GM10248 (cell line): ENCODE measurements at regions of chr16 and their contacts with region 1.

Region 1: DNA sequence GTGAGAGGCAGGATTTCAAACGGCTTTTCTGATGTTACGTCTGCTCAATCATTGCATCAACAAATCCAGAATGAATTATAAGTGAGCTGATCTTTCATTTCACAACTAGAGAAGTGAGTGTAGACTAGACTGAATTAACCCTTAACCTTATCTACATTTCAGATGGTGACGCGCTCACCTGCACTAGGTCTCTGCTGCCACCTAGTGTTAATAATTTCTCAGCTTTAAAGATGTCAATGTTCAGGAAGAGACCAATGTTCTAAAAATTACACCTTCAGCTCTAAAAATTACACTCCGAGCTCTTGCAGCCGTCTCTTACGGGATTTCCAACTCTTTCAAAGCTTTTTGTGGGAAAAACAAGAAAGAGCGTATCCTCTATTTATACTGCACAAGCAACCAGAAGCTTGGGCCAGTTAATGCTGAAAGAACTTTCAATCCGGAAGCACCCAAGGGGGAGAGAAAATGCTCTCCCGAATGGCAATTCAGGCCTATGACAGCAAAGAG is 88.2 kb upstream of the FA2H start:
- DNase-seq: peak; percentile 79
- CTCF ChIP-seq: peak; percentile 62

Region 2: DNA sequence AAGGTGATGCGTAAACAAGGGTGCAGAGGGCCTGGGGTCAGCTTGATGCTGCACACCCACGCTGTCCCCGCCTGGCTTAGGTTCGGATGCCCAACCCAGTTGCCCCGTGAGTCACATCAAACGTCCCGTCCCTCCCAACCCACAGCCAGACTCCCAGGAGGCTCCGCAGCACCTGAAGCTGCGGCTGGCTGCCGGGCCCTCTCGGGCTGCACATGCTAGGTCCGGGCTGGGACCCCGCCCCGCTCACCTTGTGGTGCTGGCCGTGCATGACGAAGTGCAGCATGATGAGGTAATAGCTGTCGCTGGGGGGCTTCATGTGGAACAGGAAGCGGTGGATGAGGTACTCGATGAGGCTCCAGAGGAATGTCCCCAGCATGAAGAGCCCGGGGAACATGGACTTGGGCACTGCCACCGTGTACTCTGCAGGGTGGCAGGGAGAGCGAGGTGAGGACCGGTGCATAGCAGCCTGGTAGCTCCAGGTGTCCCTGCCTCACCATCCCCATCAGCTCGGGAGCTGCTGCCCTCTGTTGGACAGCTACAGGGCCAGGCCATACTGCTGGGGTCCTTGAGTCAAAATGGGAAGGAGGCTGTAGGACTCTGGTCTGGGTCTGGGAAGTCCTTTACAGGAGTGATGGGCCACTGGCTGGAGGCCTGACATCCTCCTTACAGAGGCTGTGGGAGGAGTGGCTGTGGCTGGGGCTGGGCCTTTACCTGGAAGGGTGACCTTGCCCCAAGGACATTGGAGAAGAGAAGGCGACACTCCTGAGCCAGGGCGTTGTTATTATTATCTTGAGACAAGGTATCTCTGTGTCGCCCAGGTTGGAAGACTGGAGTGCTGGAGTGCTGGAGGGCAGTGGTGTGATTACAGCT is 143.8 kb before region 1 on chr16:
- CTCF ChIA-PET with region 1: interaction called, 121 read pairs
- POLR2A ChIA-PET with region 1: no interaction called
- DNase-seq: no peak
- CTCF ChIP-seq: no peak

Region 3: DNA sequence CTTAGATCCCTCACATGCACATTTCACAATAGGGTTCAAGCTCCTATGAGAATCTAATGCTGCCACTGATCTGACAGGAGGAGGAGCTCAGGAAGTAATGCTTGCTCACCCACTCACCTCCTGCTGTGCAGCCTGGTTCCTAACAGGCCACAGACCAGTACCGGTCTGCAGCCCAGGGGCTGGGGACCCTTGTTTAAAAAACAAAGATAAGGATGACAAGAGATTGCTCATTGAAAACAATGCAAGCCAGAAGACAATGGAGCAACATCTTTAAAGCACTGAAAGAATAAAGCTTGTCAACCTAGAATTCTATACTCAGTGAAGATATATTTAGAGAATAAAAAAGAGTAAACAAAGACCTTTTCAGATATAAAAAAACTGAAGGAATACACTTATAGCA is 65.4 kb before region 1 on chr16:
- CTCF ChIA-PET with region 1: interaction called, 11 read pairs
- POLR2A ChIA-PET with region 1: no interaction called
- DNase-seq: no peak
- CTCF ChIP-seq: no peak

Region 4: GRCh38 chr16:74837056-74837455 is 25.7 kb before region 1 on chr16:
- CTCF ChIA-PET with region 1: interaction called, 22 read pairs
- POLR2A ChIA-PET with region 1: no interaction called
- DNase-seq: no peak
- CTCF ChIP-seq: no peak

Region 5: GRCh38 chr16:74877706-74878105 is 14.9 kb after region 1 on chr16:
- CTCF ChIA-PET with region 1: interaction called, 42 read pairs
- POLR2A ChIA-PET with region 1: no interaction called
- DNase-seq: no peak
- CTCF ChIP-seq: no peak